HepG2 (cell line): ENCODE measurements at regions of chr16 and their contacts with region 1.

Region 1: GRCh38 chr16:4315186-4316109 is at the start of gene GLIS2:
- DNase-seq: no peak
- ATAC-seq: no peak
- H3K4me3 ChIP-seq: peak within 1 kb of the TSS; percentile 49 to 69 (median 58)
- H3K27ac ChIP-seq: no peak within 1 kb of the TSS
- H3K4me1 ChIP-seq: peaks cover 78% of the 10 kb centered on the region
- H3K27me3 ChIP-seq: peaks cover 3 to 35% of the 10 kb centered on the region in 2 experiments; a peak in 4 of 5 replicates
- CTCF ChIP-seq: no peak
- EP300 ChIP-seq: no peak
- POLR2A ChIP-seq: no peak
- RAD21 ChIP-seq: no peak
- total RNA-seq, gene GLIS2: 0.24 and 0.29 TPM in 2 replicates

Region 2: GRCh38 chr16:4208341-4208751 is 107.1 kb before region 1 on chr16:
- CTCF ChIA-PET with region 1: no interaction called
- POLR2A ChIA-PET with region 1: no interaction called
- in situ Hi-C with region 1: loop called (anchors 5 kb)
- intact Hi-C with region 1: no loop called
- DNase-seq: no peak
- ATAC-seq: peak; percentile 14; the same call in 1 of the 3 replicates
- H3K4me3 ChIP-seq: no peak overlapping the region
- H3K27ac ChIP-seq: no peak overlapping the region
- H3K4me1 ChIP-seq: peaks cover 42% of the 10 kb centered on the region
- H3K27me3 ChIP-seq: peaks cover 2 to 38% of the 10 kb centered on the region in 2 experiments; a peak in 2 of 5 replicates
- CTCF ChIP-seq: no peak
- EP300 ChIP-seq: no peak
- POLR2A ChIP-seq: no peak
- RAD21 ChIP-seq: no peak

Region 3: DNA sequence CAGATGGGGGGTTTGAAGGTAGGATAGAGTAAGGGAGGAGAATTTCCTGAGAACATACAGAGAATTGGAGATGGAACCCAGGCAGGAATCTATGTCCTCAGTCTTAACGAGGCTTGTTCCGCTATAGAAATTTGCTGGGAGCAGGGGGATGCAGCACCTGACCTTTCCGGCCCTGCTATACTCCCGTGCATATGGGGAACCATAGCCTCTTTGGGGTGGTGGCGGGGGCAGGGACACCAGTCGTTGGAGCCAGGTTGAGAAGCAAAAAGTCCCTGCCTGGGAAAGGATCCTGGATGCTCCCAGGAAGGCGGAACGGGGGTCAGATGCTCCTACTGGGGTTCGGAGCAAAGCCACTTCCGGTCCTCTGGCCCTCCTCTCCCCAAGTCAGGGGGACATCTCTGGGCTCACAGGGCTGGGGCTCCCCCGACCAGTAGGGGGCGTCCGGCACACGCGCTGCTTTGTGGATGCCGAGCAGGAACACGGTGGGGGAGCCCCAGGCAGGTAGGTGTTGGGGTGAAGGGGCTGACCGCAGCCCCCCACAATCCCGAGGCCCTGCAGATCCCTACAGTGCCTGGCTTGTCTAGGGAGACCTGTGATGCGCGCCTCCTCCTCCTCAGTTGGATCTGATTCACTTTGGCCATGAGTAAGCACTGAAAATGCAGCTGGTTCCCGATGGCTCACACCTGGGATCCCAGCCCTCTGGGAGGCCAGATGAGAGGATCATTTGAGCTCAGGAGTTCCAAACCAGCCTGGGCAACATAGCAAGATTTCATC is 27.1 kb before region 1 on chr16:
- CTCF ChIA-PET with region 1: interaction called, 4 read pairs
- POLR2A ChIA-PET with region 1: interaction called, 3 read pairs
- in situ Hi-C with region 1: no loop called
- intact Hi-C with region 1: loop called (anchors 1 kb)
- DNase-seq: peak; percentile 55
- ATAC-seq: peak; percentile 77
- H3K4me3 ChIP-seq: peak overlapping the region; percentile 7 to 55 (median 21); a peak in 4 of 6 replicates
- H3K27ac ChIP-seq: no peak overlapping the region
- H3K4me1 ChIP-seq: peaks cover 65% of the 10 kb centered on the region
- H3K27me3 ChIP-seq: peaks cover 0 to 14% of the 10 kb centered on the region in 2 experiments; a peak in 4 of 5 replicates
- CTCF ChIP-seq: peak; percentile 97
- EP300 ChIP-seq: no peak
- POLR2A ChIP-seq: no peak
- RAD21 ChIP-seq: peak; percentile 88

Region 4: DNA sequence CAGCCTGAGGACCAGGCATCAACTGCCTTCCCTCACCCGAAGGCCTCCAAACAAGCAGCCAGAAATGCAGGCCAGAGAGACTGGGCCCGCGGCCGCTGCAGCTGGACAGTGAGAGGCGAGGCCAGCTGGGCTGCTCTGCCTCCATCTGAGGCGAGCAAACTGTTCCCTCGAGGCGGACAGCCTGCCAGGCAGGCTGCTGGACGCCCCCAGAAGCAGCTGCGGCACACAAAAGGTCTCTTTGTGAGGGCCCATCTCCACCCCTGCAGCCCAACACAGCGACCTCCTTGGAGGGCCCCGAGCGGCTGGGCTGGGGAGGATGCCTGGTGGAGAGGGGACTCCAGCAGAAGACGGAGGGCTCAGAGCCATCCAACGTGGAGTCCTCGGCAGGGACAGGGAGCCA is 96.2 kb after region 1 on chr16:
- CTCF ChIA-PET with region 1: no interaction called
- POLR2A ChIA-PET with region 1: no interaction called
- in situ Hi-C with region 1: no loop called
- intact Hi-C with region 1: no loop called
- DNase-seq: no peak
- ATAC-seq: no peak
- H3K4me3 ChIP-seq: no peak overlapping the region
- H3K27ac ChIP-seq: no peak overlapping the region
- H3K4me1 ChIP-seq: peaks cover 14% of the 10 kb centered on the region
- H3K27me3 ChIP-seq: no peaks in the 10 kb centered on the region; a peak in 1 of 5 replicates
- CTCF ChIP-seq: no peak
- EP300 ChIP-seq: no peak
- POLR2A ChIP-seq: no peak
- RAD21 ChIP-seq: no peak